Panc1 (cell line): ENCODE measurements at regions of chr16 and their contacts with region 1.

Region 1: DNA sequence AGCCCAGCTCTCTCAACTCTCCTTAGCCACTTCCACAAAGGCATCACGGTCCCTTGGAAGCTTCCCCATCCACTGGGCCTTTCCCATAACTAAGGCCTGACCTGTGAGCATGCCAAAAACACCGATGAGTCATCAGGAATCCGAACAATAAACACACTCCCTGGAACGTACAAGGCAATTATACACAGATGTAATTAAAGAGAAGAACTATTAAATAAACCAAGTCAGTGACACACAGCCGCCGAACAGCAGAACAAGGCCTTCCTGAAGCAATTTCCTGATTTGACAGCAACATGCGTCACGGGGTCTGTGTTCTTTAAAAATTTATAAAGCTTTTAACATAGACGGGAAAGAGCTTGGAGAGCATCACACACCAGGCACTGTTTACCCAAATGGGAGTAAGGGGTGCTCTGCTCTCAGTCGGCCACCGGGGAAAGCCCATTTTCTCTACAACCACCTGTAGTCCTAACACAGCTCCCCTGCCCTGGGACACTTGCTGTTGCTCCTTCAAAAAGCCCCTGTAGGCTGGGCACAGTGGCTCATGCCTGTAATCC is 29.4 kb downstream of the COG7 start:
- DNase-seq: peak; percentile 86
- ATAC-seq: peak; percentile 97
- H3K4me3 ChIP-seq: peak overlapping the region in 1 of 2 experiments; percentile 11; a peak in 1 of 4 replicates
- H3K27ac ChIP-seq: peak overlapping the region; percentile 84
- H3K4me1 ChIP-seq: peaks cover 34% of the 10 kb centered on the region
- H3K27me3 ChIP-seq: no peaks in the 10 kb centered on the region
- CTCF ChIP-seq: no peak

Region 2: DNA sequence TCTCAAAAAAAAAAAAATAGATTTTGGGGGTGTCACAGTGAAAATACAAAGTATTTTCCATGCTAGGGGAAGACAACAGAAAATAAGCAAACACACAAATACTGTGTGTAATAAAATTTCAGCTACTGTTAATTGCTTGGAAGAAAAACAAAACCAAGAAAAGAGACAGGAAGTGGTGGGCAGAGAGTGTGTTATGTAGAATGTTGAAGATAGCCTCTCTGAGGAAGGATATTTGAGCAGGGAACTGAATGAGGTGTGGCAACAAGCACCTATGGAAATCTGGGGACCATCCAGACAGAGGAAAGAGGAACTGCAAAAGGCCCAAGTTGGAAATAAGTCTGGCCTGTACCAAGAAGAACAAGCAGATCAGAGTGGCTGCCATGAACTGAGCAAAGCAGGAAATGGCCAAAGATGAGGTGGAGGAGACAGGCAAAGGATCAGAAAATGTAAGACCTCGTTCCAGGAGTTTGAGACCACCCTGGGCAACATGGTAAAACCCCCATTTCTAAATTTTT is 266.6 kb before region 1 on chr16:
- CTCF ChIA-PET with region 1: no interaction called
- POLR2A ChIA-PET with region 1: interaction called, 10 read pairs
- in situ Hi-C with region 1: no loop called
- intact Hi-C with region 1: no loop called
- DNase-seq: no peak
- ATAC-seq: no peak
- H3K4me3 ChIP-seq: no peak overlapping the region
- H3K27ac ChIP-seq: no peak overlapping the region
- H3K4me1 ChIP-seq: no peaks in the 10 kb centered on the region
- H3K27me3 ChIP-seq: peaks cover 3% of the 10 kb centered on the region; the same call in 1 of the 2 replicates
- CTCF ChIP-seq: no peak

Region 3: GRCh38 chr16:23274969-23275368 is 148.6 kb before region 1 on chr16:
- CTCF ChIA-PET with region 1: no interaction called
- POLR2A ChIA-PET with region 1: no interaction called
- in situ Hi-C with region 1: no loop called
- intact Hi-C with region 1: no loop called
- DNase-seq: no peak
- ATAC-seq: peak; percentile 43; the same call in 1 of the 2 replicates
- H3K4me3 ChIP-seq: no peak overlapping the region
- H3K27ac ChIP-seq: no peak overlapping the region
- H3K4me1 ChIP-seq: peaks cover 15% of the 10 kb centered on the region
- H3K27me3 ChIP-seq: no peaks in the 10 kb centered on the region
- CTCF ChIP-seq: no peak

Region 4: GRCh38 chr16:23374731-23375510 is 48.7 kb before region 1 on chr16:
- CTCF ChIA-PET with region 1: no interaction called
- POLR2A ChIA-PET with region 1: no interaction called
- in situ Hi-C with region 1: no loop called
- intact Hi-C with region 1: no loop called
- DNase-seq: no peak
- ATAC-seq: peak; percentile 47; the same call in 1 of the 2 replicates
- H3K4me3 ChIP-seq: no peak overlapping the region
- H3K27ac ChIP-seq: no peak overlapping the region
- H3K4me1 ChIP-seq: no peaks in the 10 kb centered on the region
- H3K27me3 ChIP-seq: no peaks in the 10 kb centered on the region
- CTCF ChIP-seq: no peak